Activated CD4-positive, alpha-beta T cell treated with anti-CD3 and anti-CD28 coated beads, Interleukin-2, amount 10 ng/mL, durations not matched to agents 24 days and 14 days (primary cell): ENCODE measurements at regions of chr3 and their contacts with region 1.

Region 1: GRCh38 chr3:126703512-126704462 is at the start of gene CHCHD6:
- DNase-seq: peak; percentile 99
- H3K4me3 Mint-ChIP-seq: peak within 1 kb of the TSS; percentile 98
- H3K27ac Mint-ChIP-seq: peak within 1 kb of the TSS; percentile 92
- H3K4me1 Mint-ChIP-seq: peaks cover 15% of the 10 kb centered on the region
- H3K27me3 Mint-ChIP-seq: peaks cover 36% of the 10 kb centered on the region
- total RNA-seq, gene CHCHD6: 17.1 and 18.5 TPM in 2 replicates

Region 2: GRCh38 chr3:126357295-126358037 is 346.3 kb before region 1 on chr3 and contains the start of gene KLF15:
- intact Hi-C with region 1: loop called (anchors 2 kb)
- DNase-seq: peak; percentile 93
- H3K4me3 Mint-ChIP-seq: peak within 1 kb of the TSS; percentile 86
- H3K27ac Mint-ChIP-seq: peak within 1 kb of the TSS; percentile 62
- H3K4me1 Mint-ChIP-seq: peaks cover 7% of the 10 kb centered on the region
- H3K27me3 Mint-ChIP-seq: peaks cover 44% of the 10 kb centered on the region
- total RNA-seq, gene KLF15: 0.19 and 0.28 TPM in 2 replicates